Right ventricle myocardium superior (tissue), 1 donor: ENCODE measurements at regions of chr5 and their contacts with region 1.

Region 1: GRCh38 chr5:126972062-126972895 is 58.1 kb downstream of the MARCHF3 start:
- DNase-seq: no peak
- ATAC-seq: peak; percentile 14

Region 2: DNA sequence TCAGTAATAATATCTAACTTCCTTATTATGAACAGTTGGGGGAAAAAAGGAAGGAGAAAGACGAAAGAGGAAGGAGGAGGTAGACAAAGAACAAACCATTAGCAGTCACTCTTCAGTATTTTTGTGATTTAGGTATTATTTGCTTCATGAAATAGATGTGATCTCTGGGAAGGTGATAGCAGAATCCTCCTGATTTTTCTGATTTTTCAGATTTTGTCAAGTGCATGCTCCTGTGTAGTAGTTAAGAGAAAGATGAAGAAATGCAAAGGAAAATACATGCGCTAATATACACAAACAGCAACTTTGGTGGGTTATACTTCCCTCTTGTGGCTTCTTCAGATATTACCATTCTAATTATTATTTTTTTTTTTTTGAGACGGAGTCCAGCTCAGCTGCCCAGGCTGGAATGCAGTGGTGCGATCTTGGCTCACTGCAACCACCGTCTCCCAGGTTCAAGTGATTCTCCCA is 163.7 kb before region 1 on chr5:
- intact Hi-C with region 1: no loop called
- DNase-seq: no peak
- ATAC-seq: peak; percentile 36

Region 3: GRCh38 chr5:127029581-127030258 is 57.4 kb after region 1 on chr5:
- intact Hi-C with region 1: loop called (anchors 10 kb)
- DNase-seq: peak; percentile 63
- ATAC-seq: peak; percentile 52